Mammary epithelial cell (primary cell): ENCODE measurements at regions of chrX and their contacts with region 1.

Region 1: DNA sequence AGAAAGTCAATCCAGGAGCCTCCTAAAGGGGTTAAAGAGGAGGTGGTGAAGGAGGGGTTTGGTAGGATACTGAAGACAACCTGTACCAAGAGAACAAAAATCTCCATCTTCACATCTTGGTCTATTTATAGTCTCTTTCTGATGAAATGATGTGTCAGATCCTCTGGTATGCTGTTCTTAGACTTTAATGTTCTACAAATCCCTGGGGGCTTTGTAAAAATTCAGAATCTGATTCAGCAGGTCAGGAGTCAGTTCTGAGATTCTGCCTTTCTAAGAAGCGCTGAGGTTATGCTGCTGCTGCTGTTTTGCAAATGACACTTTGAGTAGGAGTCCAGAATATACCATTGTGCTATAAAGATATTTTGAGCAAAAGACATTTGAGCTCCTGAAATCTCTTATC is 172.9 kb upstream of the GLRA2 start:
- DNase-seq: peak; percentile 50
- H3K4me3 ChIP-seq: no peak overlapping the region
- H3K27ac ChIP-seq: peak overlapping the region; percentile 51
- H3K4me1 ChIP-seq: peaks cover 33% of the 10 kb centered on the region
- H3K27me3 ChIP-seq: no peaks in the 10 kb centered on the region
- CTCF ChIP-seq: no peak

Region 2: DNA sequence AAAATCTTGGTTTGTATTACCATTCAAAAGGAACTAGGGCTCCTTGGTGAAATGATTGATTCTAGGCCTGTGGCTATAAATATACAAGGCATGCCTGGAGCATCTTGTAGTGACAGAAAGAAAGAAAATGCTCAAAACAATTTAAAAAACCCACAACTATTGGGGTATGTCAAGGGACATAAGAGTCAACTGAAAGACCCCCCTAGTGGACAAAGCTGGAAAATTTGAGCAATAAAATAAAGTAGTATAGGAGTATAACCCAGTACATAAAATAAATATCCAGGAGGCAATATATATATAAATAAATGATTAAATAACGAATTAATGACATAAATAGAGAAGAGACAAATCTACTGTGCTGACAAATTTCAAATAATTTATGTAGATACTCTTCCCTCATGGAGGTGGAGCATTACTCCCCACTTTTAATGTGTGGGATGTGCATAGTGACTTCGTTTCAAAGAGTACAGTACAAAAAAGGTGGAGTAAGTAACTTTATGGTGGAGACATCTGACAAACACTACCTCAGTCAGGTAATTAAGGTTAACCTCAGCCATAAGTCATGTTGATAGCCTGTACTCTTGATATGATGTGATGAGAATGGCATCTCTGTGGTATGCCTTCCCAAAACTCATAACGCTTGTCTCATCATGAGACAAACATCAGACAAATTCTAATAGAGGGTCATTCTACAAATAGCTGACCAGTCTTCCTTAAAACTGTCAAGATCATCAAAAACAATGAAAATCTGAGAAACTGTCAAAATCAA is 12.0 kb before region 1 on chrX:
- CTCF ChIA-PET with region 1: no interaction called
- dilution Hi-C with region 1: no loop called
- in situ Hi-C with region 1: no loop called
- intact Hi-C with region 1: no loop called
- DNase-seq: peak; percentile 52
- H3K4me3 ChIP-seq: no peak overlapping the region
- H3K27ac ChIP-seq: no peak overlapping the region
- H3K4me1 ChIP-seq: no peaks in the 10 kb centered on the region
- H3K27me3 ChIP-seq: no peaks in the 10 kb centered on the region
- CTCF ChIP-seq: no peak

Region 3: GRCh38 chrX:14398725-14399124 is 42.3 kb after region 1 on chrX:
- CTCF ChIA-PET with region 1: no interaction called
- dilution Hi-C with region 1: no loop called
- in situ Hi-C with region 1: no loop called
- intact Hi-C with region 1: loop called (anchors 5 kb)
- DNase-seq: peak; percentile 93
- H3K4me3 ChIP-seq: no peak overlapping the region
- H3K27ac ChIP-seq: peak overlapping the region; percentile 66
- H3K4me1 ChIP-seq: peaks cover 17% of the 10 kb centered on the region
- H3K27me3 ChIP-seq: no peaks in the 10 kb centered on the region
- CTCF ChIP-seq: no peak